Right cardiac atrium (tissue), 5 donors: ENCODE measurements at regions of chr22 and their contacts with region 1.

Region 1: DNA sequence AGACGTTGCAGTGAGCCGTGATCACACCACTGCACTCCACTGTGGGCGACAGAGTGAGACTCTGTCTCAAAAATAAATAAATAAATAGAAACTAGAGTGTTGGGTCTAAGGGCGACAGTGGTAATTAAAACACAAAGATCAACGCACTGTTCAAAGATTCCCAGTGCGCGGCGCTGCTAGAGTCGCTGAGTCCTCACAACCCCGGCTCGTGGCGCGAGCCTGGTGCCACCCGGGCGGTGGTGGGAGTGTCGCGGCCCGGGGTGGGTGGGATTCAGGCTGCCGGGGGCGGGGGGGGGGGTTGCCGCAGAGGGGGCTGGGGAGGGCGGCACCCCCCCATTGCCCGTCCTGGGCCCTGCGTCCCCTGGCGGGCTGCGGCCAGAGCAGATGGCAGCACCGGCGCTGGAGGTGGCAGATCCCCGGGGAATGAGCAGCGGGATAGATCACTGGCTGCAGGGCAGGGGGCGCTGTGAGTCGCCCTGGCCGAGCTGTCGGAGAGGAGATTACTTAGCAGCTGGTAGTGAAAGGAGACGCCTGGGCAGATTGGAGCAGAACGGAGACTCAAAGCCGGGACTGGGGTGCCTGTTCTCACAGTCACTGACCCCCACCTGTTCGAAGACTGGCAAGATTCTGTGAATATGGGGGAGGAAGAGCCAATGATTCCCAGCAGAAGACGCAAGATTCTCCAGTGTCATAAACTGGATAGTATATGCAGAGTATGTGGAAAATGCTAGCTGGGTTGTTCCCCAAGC is 30.2 kb upstream of the APOBEC3A start:
- DNase-seq: peak; percentile 70 to 91 (median 91)
- ATAC-seq: peak; percentile 82 to 84
- H3K4me3 ChIP-seq: peak overlapping the region; percentile 29
- H3K27ac ChIP-seq: peak overlapping the region; percentile 34
- H3K4me1 ChIP-seq: no peaks in the 10 kb centered on the region
- H3K27me3 ChIP-seq: no peaks in the 10 kb centered on the region

Region 2: DNA sequence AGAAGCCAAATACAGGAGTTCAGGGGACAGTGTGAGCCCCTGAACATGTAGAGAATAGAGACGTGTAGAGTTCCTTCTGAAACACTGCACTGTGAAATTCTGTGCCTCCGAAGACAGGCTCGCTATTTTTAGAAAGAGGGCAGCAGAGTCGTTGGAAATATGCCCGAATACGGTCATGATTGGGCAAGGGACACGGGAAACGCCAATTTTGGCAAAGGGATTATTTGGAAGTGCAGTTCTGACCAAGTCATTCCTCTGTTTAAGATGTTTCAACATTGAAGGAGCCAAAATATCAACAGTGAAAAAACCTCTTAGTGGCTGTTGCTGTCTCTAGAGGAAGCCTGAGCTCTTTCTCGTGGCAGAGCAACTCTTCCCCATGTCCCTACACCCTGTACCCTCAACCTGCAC is 45.7 kb before region 1 on chr22:
- intact Hi-C with region 1: loop called in 2 of 4 experiments (anchors 5 to 10 kb)
- DNase-seq: peak in 1 of 3 donors; percentile 73
- ATAC-seq: peak; percentile 68 to 80
- H3K4me3 ChIP-seq: peak overlapping the region; percentile 21
- H3K27ac ChIP-seq: peak overlapping the region; percentile 99
- H3K4me1 ChIP-seq: peaks cover 10% of the 10 kb centered on the region
- H3K27me3 ChIP-seq: no peaks in the 10 kb centered on the region